Left lung (tissue), 14 donors: ENCODE measurements at regions of chr17 and their contacts with region 1.

Region 1: GRCh38 chr17:42677008-42677857 is 439 bp upstream of the PLEKHH3 start:
- DNase-seq: peak; percentile 98 to 100 (median 100)
- ATAC-seq: peak; percentile 69
- H3K4me3 ChIP-seq: peak overlapping the region; percentile 86 to 90
- H3K27ac ChIP-seq: peak overlapping the region; percentile 91 to 92
- H3K4me1 ChIP-seq: peaks cover 50 to 80% of the 10 kb centered on the region in 2 donors
- H3K27me3 ChIP-seq: peaks cover 0 to 56% of the 10 kb centered on the region in 2 donors
- CTCF ChIP-seq: no peak

Region 2: DNA sequence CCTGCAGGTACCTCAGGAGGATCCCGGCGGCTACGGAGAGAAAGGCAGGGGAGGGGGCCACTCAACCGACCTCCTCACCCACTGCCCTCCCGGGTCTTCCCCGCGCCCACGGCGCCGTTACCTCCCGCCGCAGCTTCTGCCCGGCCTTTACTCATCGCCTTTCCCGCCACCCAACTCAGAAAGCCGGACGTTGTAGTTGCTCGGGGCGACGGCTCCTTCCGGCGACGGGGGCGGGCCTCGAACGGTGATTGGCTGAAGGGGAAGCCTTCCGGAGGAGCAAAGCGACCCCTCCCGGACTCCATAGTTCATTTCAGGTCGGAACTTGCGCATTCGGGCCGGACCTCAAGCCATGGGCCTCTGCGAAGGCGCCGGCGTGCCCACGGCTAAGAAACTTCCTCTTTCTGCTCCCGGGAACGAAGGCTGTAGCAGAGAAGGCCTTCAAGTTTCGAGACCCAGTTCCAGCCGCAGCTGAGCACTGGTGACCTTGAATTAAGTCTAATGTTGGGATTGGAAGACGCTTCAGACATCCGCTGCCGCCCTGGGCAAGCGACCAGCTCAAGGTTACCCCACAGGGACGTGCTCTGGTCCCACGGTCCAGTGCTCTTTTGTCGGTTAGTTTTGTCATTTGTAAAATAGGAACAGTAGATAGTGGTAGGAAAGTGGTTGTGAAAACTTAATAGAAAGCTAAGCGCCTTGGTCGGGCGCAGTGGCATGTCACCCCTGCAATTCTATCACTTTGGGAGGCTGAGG is 99.5 kb before region 1 on chr17 and contains the start of gene PSMC3IP:
- intact Hi-C with region 1: loop called in 1 of 2 experiments (anchors 5 kb)
- DNase-seq: peak; percentile 94 to 97 (median 96)
- ATAC-seq: peak; percentile 97
- H3K4me3 ChIP-seq: peak within 1 kb of the TSS; percentile 68 to 73
- H3K27ac ChIP-seq: peak within 1 kb of the TSS; percentile 90 to 98
- H3K4me1 ChIP-seq: peaks cover 11 to 28% of the 10 kb centered on the region in 2 donors
- H3K27me3 ChIP-seq: no peaks in the 10 kb centered on the region
- CTCF ChIP-seq: peak; percentile 13 to 35
- polyA plus RNA-seq, gene PSMC3IP: 15.9 to 21.4 (median 19.3) TPM

Region 3: GRCh38 chr17:42720996-42721583 is 43.9 kb after region 1 on chr17:
- intact Hi-C with region 1: no loop called
- DNase-seq: peak in 2 of 4 donors; percentile 52 to 80
- ATAC-seq: peak; percentile 93
- H3K4me3 ChIP-seq: no peak overlapping the region
- H3K27ac ChIP-seq: no peak overlapping the region
- H3K4me1 ChIP-seq: peaks cover 0 to 8% of the 10 kb centered on the region in 2 donors
- H3K27me3 ChIP-seq: no peaks in the 10 kb centered on the region
- CTCF ChIP-seq: peak; percentile 58 to 60

Region 4: GRCh38 chr17:42937712-42938596 is 260.7 kb after region 1 on chr17:
- intact Hi-C with region 1: no loop called
- DNase-seq: peak in 1 of 4 donors; percentile 73
- ATAC-seq: peak; percentile 84
- H3K4me3 ChIP-seq: no peak overlapping the region
- H3K27ac ChIP-seq: no peak overlapping the region
- H3K4me1 ChIP-seq: no peaks in the 10 kb centered on the region
- H3K27me3 ChIP-seq: no peaks in the 10 kb centered on the region
- CTCF ChIP-seq: peak; percentile 34 to 37